SK-N-SH (cell line): ENCODE measurements at regions of chr9 and their contacts with region 1.

Region 1: GRCh38 chr9:129737479-129738274 is 15.2 kb downstream of the PTGES start:
- DNase-seq: peak; percentile 94
- H3K4me3 ChIP-seq: peak overlapping the region; percentile 49 to 70
- H3K27ac ChIP-seq: no peak overlapping the region
- H3K4me1 ChIP-seq: peaks cover 0 to 5% of the 10 kb centered on the region in 2 experiments; a peak in 1 of 4 replicates
- H3K27me3 ChIP-seq: no peaks in the 10 kb centered on the region
- CTCF ChIP-seq: peak; percentile 92
- EP300 ChIP-seq: no peak
- RAD21 ChIP-seq: peak; percentile 79

Region 2: DNA sequence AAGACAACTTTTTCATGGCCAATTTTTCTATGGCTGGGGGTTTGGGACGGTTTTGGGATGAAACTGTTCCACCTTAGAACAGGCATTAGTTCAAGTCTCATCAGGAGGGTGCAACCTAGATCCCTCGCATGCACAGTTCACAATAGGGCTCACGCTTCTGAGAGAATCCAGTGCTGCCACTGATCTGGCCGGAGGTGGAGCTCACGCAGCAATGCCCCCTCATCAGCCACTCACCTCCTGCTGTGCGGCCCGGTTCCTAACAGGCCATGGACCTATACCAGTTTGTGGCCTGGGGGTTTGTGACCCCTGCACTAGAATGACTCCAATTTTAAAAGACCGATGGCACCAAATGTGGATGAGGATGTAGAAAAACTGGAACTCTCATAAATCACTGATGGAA is 432.4 kb before region 1 on chr9:
- CTCF ChIA-PET with region 1: no interaction called
- POLR2A ChIA-PET with region 1: no interaction called
- DNase-seq: no peak
- H3K4me3 ChIP-seq: no peak overlapping the region
- H3K27ac ChIP-seq: no peak overlapping the region
- H3K4me1 ChIP-seq: no peaks in the 10 kb centered on the region
- H3K27me3 ChIP-seq: no peaks in the 10 kb centered on the region
- CTCF ChIP-seq: no peak
- EP300 ChIP-seq: no peak
- RAD21 ChIP-seq: no peak

Region 3: GRCh38 chr9:129676975-129677841 is 60.5 kb before region 1 on chr9:
- CTCF ChIA-PET with region 1: interaction called, 10 read pairs
- POLR2A ChIA-PET with region 1: no interaction called
- DNase-seq: peak; percentile 84
- H3K4me3 ChIP-seq: no peak overlapping the region
- H3K27ac ChIP-seq: peak overlapping the region in 1 of 2 experiments; percentile 40; a peak in 2 of 4 replicates
- H3K4me1 ChIP-seq: peaks cover 0 to 42% of the 10 kb centered on the region in 2 experiments; a peak in 2 of 4 replicates
- H3K27me3 ChIP-seq: peaks cover 14% of the 10 kb centered on the region; the same call in 1 of the 2 replicates
- CTCF ChIP-seq: no peak
- EP300 ChIP-seq: no peak
- RAD21 ChIP-seq: no peak

Region 4: DNA sequence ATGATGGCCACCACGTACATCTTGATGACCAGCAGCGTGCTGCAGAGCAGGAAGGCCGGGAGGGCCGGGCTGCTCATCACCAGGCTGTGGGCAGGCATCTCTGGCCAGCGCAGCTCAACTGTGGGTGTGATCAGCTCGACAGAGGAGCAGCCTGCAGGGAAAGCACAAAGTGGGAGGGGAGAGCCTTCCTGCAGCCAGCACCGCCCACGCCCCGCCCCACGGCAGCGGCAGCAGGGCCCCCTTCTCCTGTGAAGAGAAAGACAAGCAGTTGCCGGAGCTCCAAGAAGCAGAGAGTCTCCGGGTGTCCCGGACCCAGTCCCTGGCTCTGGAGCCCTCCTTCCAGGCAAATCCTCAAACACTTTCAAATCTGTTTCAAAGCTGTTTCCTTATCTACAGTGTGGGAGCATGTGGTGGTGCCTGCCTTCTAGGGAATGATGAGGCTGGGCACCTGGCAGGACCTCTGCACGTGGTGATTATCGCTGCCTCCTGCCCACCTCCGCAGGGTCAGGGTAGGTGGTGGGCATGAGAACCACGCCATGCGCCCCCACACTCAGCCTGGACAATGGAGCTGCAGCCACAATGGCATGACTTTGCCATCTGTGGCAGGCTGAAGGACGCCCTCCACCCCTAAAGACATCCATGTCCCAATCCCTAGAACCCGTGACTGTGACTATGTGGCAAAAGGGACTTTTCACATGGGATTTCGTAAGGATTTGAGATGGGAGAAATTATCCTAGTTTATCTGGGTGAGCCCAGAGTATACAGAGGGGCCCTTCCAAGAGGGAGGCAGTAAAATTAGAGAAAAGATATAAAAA is 15.4 kb after region 1 on chr9 and contains the start of gene PTGES:
- CTCF ChIA-PET with region 1: interaction called, 78 read pairs
- POLR2A ChIA-PET with region 1: no interaction called
- DNase-seq: peak; percentile 86
- H3K4me3 ChIP-seq: peak within 1 kb of the TSS; percentile 28 to 29; a peak in 3 of 4 replicates
- H3K27ac ChIP-seq: no peak within 1 kb of the TSS; a peak in 1 of 4 replicates
- H3K4me1 ChIP-seq: peaks cover 5 to 20% of the 10 kb centered on the region in 2 experiments; a peak in 2 of 4 replicates
- H3K27me3 ChIP-seq: no peaks in the 10 kb centered on the region
- CTCF ChIP-seq: no peak
- EP300 ChIP-seq: no peak
- RAD21 ChIP-seq: no peak
- polyA plus RNA-seq, gene PTGES: 3.2 and 5.2 TPM in 2 replicates

Region 5: GRCh38 chr9:129776938-129777768 is 39.5 kb after region 1 on chr9:
- CTCF ChIA-PET with region 1: interaction called, 356 read pairs
- POLR2A ChIA-PET with region 1: interaction called, 4 read pairs
- DNase-seq: peak; percentile 45
- H3K4me3 ChIP-seq: no peak overlapping the region; a peak in 1 of 4 replicates
- H3K27ac ChIP-seq: peak overlapping the region; percentile 13 to 79; a peak in 3 of 4 replicates
- H3K4me1 ChIP-seq: peaks cover 4 to 6% of the 10 kb centered on the region in 2 experiments; a peak in 1 of 4 replicates
- H3K27me3 ChIP-seq: no peaks in the 10 kb centered on the region
- CTCF ChIP-seq: no peak
- EP300 ChIP-seq: peak in 1 of 2 experiments; percentile 49; a peak in 1 of 4 replicates
- RAD21 ChIP-seq: no peak

Region 6: GRCh38 chr9:130088051-130088450 is 350.4 kb after region 1 on chr9:
- CTCF ChIA-PET with region 1: no interaction called
- POLR2A ChIA-PET with region 1: no interaction called
- DNase-seq: no peak
- H3K4me3 ChIP-seq: no peak overlapping the region
- H3K27ac ChIP-seq: no peak overlapping the region
- H3K4me1 ChIP-seq: no peaks in the 10 kb centered on the region
- H3K27me3 ChIP-seq: no peaks in the 10 kb centered on the region
- CTCF ChIP-seq: no peak
- EP300 ChIP-seq: no peak
- RAD21 ChIP-seq: no peak

Region 7: DNA sequence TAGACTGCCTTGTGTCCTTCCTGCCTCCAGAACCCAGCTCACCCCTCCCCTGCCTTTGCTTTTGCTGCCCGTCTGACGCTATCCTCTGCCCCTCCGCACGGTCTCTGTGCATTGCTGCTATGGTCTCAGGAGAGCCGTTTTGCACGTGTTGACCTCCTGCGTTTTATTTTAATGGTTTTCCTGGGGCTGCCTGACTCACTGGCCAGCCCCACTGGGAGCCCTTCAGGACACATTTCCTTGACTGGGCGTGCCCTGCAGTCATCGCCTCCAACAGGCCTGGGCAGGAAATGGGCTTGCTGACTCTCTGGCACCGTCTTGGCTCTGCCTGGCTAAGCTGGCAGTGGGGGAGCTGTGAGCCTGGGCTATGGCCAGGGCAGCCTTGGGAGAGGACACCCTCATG is 689.2 kb after region 1 on chr9:
- CTCF ChIA-PET with region 1: no interaction called
- POLR2A ChIA-PET with region 1: no interaction called
- DNase-seq: no peak
- H3K4me3 ChIP-seq: no peak overlapping the region
- H3K27ac ChIP-seq: no peak overlapping the region
- H3K4me1 ChIP-seq: peaks cover 12 to 46% of the 10 kb centered on the region in 2 experiments
- H3K27me3 ChIP-seq: no peaks in the 10 kb centered on the region; the same call in 1 of the 2 replicates
- CTCF ChIP-seq: no peak
- EP300 ChIP-seq: peak in 1 of 2 experiments; percentile 21; a peak in 1 of 4 replicates
- RAD21 ChIP-seq: no peak